Activated CD4-positive, alpha-beta T cell treated with anti-CD3 and anti-CD28 coated beads, Interleukin-2, amount 10 ng/mL, durations not matched to agents 24 days and 14 days (primary cell): ENCODE measurements at regions of chr17 and their contacts with region 1.

Region 1: GRCh38 chr17:66348584-66349165 is 46.3 kb downstream of the PRKCA start:
- DNase-seq: peak; percentile 64
- H3K4me3 Mint-ChIP-seq: peak overlapping the region; percentile 32
- H3K27ac Mint-ChIP-seq: peak overlapping the region; percentile 84
- H3K4me1 Mint-ChIP-seq: peaks cover 56% of the 10 kb centered on the region
- H3K27me3 Mint-ChIP-seq: no peaks in the 10 kb centered on the region

Region 2: DNA sequence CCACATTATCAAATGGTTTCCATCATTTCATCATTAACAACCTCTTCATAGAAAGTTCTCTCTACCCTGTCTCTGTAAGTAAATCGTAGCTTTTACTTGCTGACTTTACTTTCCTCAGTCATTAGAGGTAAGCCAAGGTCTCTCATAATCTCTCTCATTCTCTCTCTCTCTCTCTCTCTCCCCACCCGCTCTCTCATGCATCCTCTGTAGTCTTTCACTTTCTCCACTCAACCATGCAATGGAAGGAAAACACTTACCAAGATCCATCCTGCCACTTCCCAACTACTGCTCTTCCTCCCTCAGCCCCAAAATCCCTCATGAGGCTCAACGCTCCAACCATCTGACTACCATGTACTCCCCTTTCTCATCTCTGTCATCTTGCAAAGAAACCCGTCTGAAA is 162.8 kb before region 1 on chr17:
- intact Hi-C with region 1: no loop called
- DNase-seq: no peak
- H3K4me3 Mint-ChIP-seq: no peak overlapping the region
- H3K27ac Mint-ChIP-seq: no peak overlapping the region
- H3K4me1 Mint-ChIP-seq: peaks cover 2% of the 10 kb centered on the region
- H3K27me3 Mint-ChIP-seq: no peaks in the 10 kb centered on the region

Region 3: GRCh38 chr17:66200685-66201092 is 148.0 kb before region 1 on chr17:
- intact Hi-C with region 1: no loop called
- DNase-seq: peak; percentile 80
- H3K4me3 Mint-ChIP-seq: no peak overlapping the region
- H3K27ac Mint-ChIP-seq: peak overlapping the region; percentile 43
- H3K4me1 Mint-ChIP-seq: peaks cover 9% of the 10 kb centered on the region
- H3K27me3 Mint-ChIP-seq: no peaks in the 10 kb centered on the region

Region 4: DNA sequence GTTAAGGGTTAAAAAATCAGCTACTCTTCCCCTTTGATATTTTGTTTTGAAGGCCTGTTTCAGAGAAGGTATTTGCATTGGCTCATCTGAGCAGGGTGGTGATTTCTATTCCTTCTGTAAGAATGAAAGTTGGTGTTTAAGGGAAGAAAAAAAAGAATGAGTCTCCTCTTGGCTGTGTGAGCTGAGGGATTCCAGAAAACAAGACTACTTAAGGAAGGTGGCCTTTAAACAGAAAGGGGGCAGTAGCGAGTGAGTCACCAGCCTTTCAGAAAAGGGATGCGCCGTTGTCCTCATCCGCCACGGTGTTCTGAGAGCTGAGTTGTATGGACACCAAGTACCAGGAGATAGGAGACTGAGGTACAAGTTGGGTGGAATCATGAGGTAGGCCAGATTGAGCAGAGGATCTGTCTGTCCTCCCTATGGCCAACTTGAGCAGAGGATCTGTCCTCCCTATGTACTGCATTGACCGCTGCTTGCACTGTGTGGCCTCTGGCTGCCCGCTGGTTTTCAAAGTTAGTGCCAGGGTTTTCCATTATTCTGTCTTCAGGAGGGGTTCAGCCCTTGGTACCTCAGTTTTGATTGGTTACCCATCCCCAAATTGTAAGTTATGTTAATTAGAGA is 38.0 kb before region 1 on chr17:
- intact Hi-C with region 1: loop called (anchors 2 kb)
- DNase-seq: no peak
- H3K4me3 Mint-ChIP-seq: peak overlapping the region; percentile 77
- H3K27ac Mint-ChIP-seq: peak overlapping the region; percentile 80
- H3K4me1 Mint-ChIP-seq: peaks cover 82% of the 10 kb centered on the region
- H3K27me3 Mint-ChIP-seq: no peaks in the 10 kb centered on the region

Region 5: DNA sequence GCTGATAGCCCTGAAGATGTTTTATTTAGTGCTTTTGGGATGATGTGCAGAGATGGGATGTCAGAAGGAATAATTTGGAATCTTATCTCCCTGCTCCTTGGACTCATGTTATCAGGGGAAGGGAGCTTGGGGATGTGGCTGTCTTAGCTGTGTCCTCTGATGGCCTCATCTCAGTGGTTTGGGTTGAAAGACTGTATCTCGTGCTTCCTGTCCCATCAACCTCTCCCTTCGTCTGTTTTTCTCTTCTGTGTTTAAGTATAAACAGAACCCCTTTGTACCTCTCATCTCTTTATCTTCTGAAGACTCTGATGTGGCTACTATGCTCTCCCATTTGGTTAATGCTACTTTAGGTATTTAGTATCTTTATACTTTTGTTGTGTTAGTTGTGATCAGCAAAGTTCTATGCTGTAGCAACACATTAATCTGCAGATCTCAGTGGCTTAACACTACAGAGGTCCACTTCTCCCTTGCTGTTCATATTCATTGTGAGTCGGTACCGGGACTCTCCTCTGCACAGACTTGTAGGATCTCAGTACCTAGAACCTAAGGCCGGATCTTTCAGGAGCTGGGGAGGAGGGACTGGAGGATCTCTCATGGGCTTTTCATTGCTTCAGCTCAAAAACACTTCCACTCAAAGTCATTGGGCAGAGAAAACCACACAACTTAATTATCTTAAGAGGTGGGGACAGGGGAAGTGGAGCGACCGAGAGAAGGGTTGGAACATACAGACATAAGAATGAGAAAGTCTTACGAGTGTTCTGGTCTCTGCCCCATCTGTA is 17.4 kb before region 1 on chr17:
- intact Hi-C with region 1: loop called (anchors 2 kb)
- DNase-seq: peak; percentile 79
- H3K4me3 Mint-ChIP-seq: peak overlapping the region; percentile 80
- H3K27ac Mint-ChIP-seq: peak overlapping the region; percentile 94
- H3K4me1 Mint-ChIP-seq: peaks cover 60% of the 10 kb centered on the region
- H3K27me3 Mint-ChIP-seq: no peaks in the 10 kb centered on the region

Region 6: GRCh38 chr17:66364990-66365490 is 16.4 kb after region 1 on chr17:
- intact Hi-C with region 1: loop called (anchors 1 kb)
- DNase-seq: peak; percentile 70
- H3K4me3 Mint-ChIP-seq: peak overlapping the region; percentile 49
- H3K27ac Mint-ChIP-seq: peak overlapping the region; percentile 91
- H3K4me1 Mint-ChIP-seq: peaks cover 68% of the 10 kb centered on the region
- H3K27me3 Mint-ChIP-seq: no peaks in the 10 kb centered on the region

Region 7: DNA sequence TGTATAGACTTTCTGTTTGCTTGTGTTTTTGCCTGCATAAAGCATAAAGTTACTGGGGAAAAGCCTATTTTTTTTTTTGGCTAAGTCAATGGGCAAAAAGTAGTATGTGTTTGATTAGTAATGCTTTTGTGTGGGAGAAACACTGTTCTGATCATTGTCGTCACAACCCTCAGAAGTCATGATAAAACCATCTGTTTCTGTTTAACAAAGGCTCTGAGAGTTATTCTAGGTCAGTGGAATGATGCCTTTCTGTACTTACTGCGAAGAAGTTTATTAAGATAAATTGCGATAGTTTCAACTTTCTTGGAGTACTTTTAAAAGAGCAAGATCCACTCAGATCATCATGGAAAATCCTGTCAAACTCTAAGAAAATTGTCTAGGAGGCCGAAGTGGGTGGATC is 34.7 kb after region 1 on chr17:
- intact Hi-C with region 1: loop called (anchors 5 kb)
- DNase-seq: no peak
- H3K4me3 Mint-ChIP-seq: no peak overlapping the region
- H3K27ac Mint-ChIP-seq: peak overlapping the region; percentile 66
- H3K4me1 Mint-ChIP-seq: peaks cover 53% of the 10 kb centered on the region
- H3K27me3 Mint-ChIP-seq: no peaks in the 10 kb centered on the region